Calu3 (cell line): ENCODE measurements at regions of chr10 and their contacts with region 1.

Region 1: DNA sequence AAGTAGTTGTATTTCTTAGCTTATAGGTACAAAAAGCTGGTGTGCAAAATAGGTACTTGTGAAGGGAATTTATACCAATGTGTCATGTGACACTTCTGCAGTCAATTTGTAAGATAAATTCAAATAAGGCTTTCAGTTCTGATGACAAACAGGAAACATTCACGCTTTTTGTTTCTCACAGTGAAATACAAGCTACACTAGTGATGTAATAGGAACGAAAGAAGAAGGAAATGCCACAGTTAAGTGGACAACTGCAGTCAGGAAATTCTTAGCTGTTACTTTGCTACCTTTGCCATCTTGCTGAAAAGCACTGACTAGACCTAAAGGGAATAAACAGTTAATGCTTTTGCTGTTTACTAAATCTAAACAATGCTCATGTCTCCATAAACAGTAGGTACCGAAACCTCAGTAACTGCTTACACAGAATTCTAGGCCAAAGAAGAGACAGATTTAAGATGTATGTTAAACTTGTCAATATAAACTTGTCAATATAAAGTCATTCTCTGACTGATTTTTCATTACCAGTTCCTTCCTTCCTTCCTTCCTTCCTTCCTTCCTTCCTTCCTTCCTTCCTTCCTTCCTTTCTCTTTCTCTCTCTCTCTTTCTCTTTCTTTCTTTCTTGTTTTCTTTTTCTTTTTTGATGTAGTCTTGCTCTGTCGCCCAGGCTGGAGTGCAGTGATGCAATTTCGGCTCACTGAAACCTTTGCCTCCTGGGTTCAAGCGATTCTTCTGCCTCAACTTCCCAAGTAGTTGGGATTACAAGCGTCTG is 10.1 kb downstream of the OTUD1 start:
- DNase-seq: no peak
- H3K4me3 Mint-ChIP-seq: no peak overlapping the region
- H3K27ac Mint-ChIP-seq: peak overlapping the region; percentile 8
- H3K4me1 Mint-ChIP-seq: peaks cover 12% of the 10 kb centered on the region
- H3K27me3 Mint-ChIP-seq: no peaks in the 10 kb centered on the region
- CTCF ChIP-seq: no peak

Region 2: GRCh38 chr10:23474626-23475025 is 25.6 kb after region 1 on chr10:
- CTCF ChIA-PET with region 1: no interaction called
- intact Hi-C with region 1: no loop called
- DNase-seq: no peak
- H3K4me3 Mint-ChIP-seq: no peak overlapping the region
- H3K27ac Mint-ChIP-seq: no peak overlapping the region
- H3K4me1 Mint-ChIP-seq: no peaks in the 10 kb centered on the region
- H3K27me3 Mint-ChIP-seq: peaks cover 24% of the 10 kb centered on the region
- CTCF ChIP-seq: no peak

Region 3: DNA sequence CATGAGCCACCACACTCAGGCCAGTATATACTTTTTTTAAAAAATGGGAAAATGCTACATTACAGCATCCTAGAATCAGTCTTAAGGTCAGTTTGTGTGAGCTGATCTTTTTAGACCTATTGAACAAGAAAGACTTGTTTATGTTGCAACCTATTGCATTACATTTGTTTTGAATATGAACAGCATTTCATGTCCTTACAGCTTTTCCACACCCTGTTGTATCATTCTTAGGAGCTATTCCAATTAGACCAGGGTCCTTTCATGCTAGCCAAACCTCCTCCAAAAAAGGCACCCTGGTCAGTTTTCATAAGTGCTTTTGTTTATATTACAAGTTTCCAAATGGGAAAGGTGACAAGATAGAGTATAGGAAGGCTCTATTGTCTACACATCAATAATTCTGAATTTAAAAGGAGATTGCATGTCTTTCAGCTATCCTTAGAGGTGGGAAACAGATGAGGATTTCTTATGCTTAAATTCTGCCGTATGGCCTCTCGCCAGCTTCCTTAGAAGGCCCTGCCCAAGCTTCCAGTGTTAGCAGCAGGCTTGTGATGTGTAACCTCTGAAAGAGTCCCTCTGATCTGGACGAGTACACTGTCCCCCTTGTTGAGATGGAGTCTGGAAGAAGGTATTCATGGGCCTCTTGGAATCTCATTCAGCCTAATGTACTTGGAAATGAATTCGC is 161.8 kb after region 1 on chr10:
- CTCF ChIA-PET with region 1: interaction called, 10 read pairs
- intact Hi-C with region 1: no loop called
- DNase-seq: no peak
- H3K4me3 Mint-ChIP-seq: no peak overlapping the region
- H3K27ac Mint-ChIP-seq: no peak overlapping the region
- H3K4me1 Mint-ChIP-seq: no peaks in the 10 kb centered on the region
- H3K27me3 Mint-ChIP-seq: peaks cover 10% of the 10 kb centered on the region
- CTCF ChIP-seq: no peak